ENCODE measurements at regions of chr20 and their contacts with region 1.

Region 1: DNA sequence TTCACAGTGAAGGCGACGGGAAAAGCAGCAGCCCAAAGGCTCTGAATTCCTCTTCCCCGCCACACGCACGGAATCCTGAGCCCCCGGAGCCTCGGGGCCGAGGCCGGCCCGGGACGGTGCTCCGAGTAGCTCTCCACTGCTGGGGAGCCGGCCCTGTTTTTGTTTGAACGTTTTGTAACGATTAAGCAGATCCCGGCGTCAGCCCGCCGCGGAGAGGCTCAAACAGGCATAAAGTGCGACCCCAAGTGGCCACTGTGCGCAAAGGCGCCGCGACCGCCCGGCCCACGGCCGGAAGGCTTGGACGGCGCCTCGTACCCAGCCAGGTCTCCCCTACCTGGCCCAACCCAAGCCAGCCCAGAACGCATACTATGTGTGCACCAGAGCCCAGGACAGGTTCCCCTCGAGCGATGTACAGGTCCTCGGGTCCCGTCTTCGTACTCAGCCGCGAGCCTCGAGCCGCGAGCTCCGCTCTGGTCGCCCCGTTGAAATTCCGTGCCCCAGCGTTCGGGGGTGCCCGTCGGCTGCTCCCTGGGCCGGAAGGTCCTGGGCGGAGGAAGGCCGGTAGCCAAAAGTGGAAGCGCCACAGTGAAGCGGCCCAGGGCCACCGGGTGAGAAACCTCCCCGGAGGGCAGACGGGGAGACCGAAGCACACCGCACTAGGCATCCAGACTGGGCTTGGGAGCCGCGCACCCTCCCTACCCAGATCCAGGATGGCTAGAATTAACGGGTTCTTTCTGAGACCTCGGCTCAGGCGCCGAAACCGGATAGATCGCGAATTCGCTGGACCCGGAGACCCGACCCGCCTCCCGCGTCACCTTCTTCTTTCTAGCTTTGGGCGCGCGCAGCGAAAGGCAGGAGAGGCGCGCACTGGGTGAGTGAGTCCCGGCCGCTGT is 1.2 kb upstream of the MAFB start:
- DNase-seq: peak; percentile 86 to 89 (median 86)
- H3K4me3 ChIP-seq: peak overlapping the region; percentile 42 to 99 (median 72)
- H3K4me3 Mint-ChIP-seq: peak overlapping the region; percentile 83 to 86
- H3K27ac ChIP-seq: peak overlapping the region; percentile 95 to 99
- H3K27ac Mint-ChIP-seq: peak overlapping the region; percentile 93 to 99 (median 96)
- H3K4me1 ChIP-seq: peaks cover 34 to 54% of the 10 kb centered on the region in 2 donors
- H3K4me1 Mint-ChIP-seq: peaks cover 46% of the 10 kb centered on the region
- H3K27me3 ChIP-seq: peaks cover 51 to 69% of the 10 kb centered on the region in 2 donors
- H3K27me3 Mint-ChIP-seq: peaks cover 71 to 81% (median 75%) of the 10 kb centered on the region in 3 donors
- CTCF ChIP-seq: peak; percentile 92

Region 2: GRCh38 chr20:39885975-39886649 is 804.1 kb before region 1 on chr20:
- intact Hi-C with region 1: loop called (anchors 10 kb)
- DNase-seq: peak; percentile 12 to 40 (median 34)
- H3K4me3 ChIP-seq: no peak overlapping the region
- H3K4me3 Mint-ChIP-seq: no peak overlapping the region
- H3K27ac ChIP-seq: no peak overlapping the region
- H3K27ac Mint-ChIP-seq: no peak overlapping the region
- H3K4me1 ChIP-seq: peaks cover 0 to 3% of the 10 kb centered on the region in 2 donors
- H3K4me1 Mint-ChIP-seq: peaks cover 6% of the 10 kb centered on the region
- H3K27me3 ChIP-seq: peaks cover 0 to 2% of the 10 kb centered on the region in 2 donors
- H3K27me3 Mint-ChIP-seq: peaks cover 0 to 3% (median 2%) of the 10 kb centered on the region in 3 donors
- CTCF ChIP-seq: peak; percentile 61

Region 3: DNA sequence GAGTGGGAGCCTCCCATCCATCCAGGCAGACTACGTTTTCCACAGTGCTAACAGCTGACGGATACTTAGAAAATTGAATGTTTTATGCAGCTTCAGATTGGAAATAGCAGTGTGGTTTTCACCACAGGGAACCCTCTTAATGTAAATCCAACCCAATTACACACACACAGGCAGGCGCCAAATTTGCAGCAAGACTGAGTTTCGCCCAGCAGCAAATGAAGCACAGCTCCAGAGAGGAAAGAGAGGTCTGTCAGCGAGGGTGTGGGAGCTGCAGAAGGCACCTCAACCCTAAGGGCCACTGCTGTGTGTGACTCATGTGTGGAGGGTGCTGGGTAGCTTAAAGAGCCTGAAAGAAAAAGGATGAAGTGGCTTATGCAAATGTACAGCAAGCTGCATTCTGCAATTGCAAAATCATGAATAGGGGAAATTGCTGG is 366.8 kb before region 1 on chr20:
- intact Hi-C with region 1: loop called (anchors 5 to 10 kb)
- DNase-seq: peak; percentile 92 to 96 (median 94)
- H3K4me3 ChIP-seq: peak overlapping the region in 1 of 3 experiments; percentile 27
- H3K4me3 Mint-ChIP-seq: peak overlapping the region; percentile 35 to 44
- H3K27ac ChIP-seq: peak overlapping the region; percentile 78 to 89
- H3K27ac Mint-ChIP-seq: peak overlapping the region; percentile 92 to 99 (median 95)
- H3K4me1 ChIP-seq: peaks cover 71 to 78% of the 10 kb centered on the region in 2 donors
- H3K4me1 Mint-ChIP-seq: peaks cover 72% of the 10 kb centered on the region
- H3K27me3 ChIP-seq: no peaks in the 10 kb centered on the region
- H3K27me3 Mint-ChIP-seq: peaks cover 0 to 6% (median 6%) of the 10 kb centered on the region in 3 donors
- CTCF ChIP-seq: no peak

Region 4: GRCh38 chr20:40492716-40493470 is 197.3 kb before region 1 on chr20:
- intact Hi-C with region 1: loop called (anchors 5 to 10 kb)
- DNase-seq: no peak
- H3K4me3 ChIP-seq: no peak overlapping the region
- H3K4me3 Mint-ChIP-seq: no peak overlapping the region
- H3K27ac ChIP-seq: peak overlapping the region; percentile 98 to 99
- H3K27ac Mint-ChIP-seq: peak overlapping the region; percentile 92 to 100 (median 99)
- H3K4me1 ChIP-seq: peaks cover 69 to 71% of the 10 kb centered on the region in 2 donors
- H3K4me1 Mint-ChIP-seq: peaks cover 70% of the 10 kb centered on the region
- H3K27me3 ChIP-seq: no peaks in the 10 kb centered on the region
- H3K27me3 Mint-ChIP-seq: peaks cover 0 to 3% (median 2%) of the 10 kb centered on the region in 3 donors
- CTCF ChIP-seq: no peak

Region 5: GRCh38 chr20:40506567-40506966 is 183.6 kb before region 1 on chr20:
- intact Hi-C with region 1: loop called in 1 of 2 experiments (anchors 5 kb)
- DNase-seq: peak; percentile 100
- H3K4me3 ChIP-seq: no peak overlapping the region
- H3K4me3 Mint-ChIP-seq: no peak overlapping the region
- H3K27ac ChIP-seq: peak overlapping the region; percentile 82 to 88
- H3K27ac Mint-ChIP-seq: peak overlapping the region; percentile 91 to 98 (median 95)
- H3K4me1 ChIP-seq: peaks cover 57 to 83% of the 10 kb centered on the region in 2 donors
- H3K4me1 Mint-ChIP-seq: peaks cover 80% of the 10 kb centered on the region
- H3K27me3 ChIP-seq: no peaks in the 10 kb centered on the region
- H3K27me3 Mint-ChIP-seq: peaks cover 0 to 1% (median 0%) of the 10 kb centered on the region in 3 donors
- CTCF ChIP-seq: no peak

Region 6: DNA sequence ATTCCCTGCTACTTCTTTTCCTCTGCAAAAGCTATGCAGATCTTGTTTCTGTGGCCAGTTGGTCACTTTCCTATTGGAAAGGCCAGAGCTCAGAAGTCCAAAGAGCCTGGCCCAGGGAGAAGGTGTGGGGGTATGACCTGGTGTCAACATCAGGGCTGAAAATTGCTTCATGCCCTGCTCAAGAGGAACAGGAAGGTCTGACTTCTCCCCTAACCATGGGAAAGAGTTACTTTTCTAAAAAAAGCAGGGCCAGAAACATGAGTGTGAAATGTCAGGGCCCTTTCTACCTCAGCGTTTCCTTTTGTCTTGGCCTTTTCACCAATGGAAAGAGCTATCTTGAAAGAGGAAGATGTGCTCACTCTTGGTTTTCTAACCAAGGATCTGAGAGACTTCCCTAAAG is 118.5 kb before region 1 on chr20:
- intact Hi-C with region 1: loop called in 1 of 2 experiments (anchors 10 kb)
- DNase-seq: peak; percentile 79 to 92 (median 88)
- H3K4me3 ChIP-seq: peak overlapping the region in 1 of 3 experiments; percentile 57
- H3K4me3 Mint-ChIP-seq: peak overlapping the region; percentile 41 to 57
- H3K27ac ChIP-seq: peak overlapping the region; percentile 92 to 95
- H3K27ac Mint-ChIP-seq: peak overlapping the region; percentile 88 to 97 (median 95)
- H3K4me1 ChIP-seq: peaks cover 53 to 59% of the 10 kb centered on the region in 2 donors
- H3K4me1 Mint-ChIP-seq: peaks cover 57% of the 10 kb centered on the region
- H3K27me3 ChIP-seq: no peaks in the 10 kb centered on the region
- H3K27me3 Mint-ChIP-seq: peaks cover 3 to 8% (median 3%) of the 10 kb centered on the region in 3 donors
- CTCF ChIP-seq: no peak

Region 7: DNA sequence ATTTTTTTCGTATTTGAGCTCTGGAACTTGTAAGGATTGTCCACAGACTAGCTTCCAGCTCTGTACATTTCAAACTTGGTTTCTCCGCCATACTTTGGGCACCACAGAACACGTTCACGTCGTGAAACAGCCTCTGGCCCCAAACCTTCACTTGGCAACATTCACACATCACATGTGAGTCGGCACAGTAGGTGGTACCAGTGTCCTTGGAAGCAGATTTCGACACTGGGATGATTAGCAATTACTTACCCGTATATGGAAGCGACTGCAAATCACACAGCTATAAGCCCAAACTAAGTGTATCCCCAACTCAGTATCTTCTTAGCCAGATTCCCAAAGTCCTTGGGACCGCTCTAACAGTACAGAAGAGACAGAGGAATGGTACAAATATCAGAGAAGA is 61.3 kb before region 1 on chr20:
- intact Hi-C with region 1: no loop called
- DNase-seq: no peak
- H3K4me3 ChIP-seq: no peak overlapping the region
- H3K4me3 Mint-ChIP-seq: no peak overlapping the region
- H3K27ac ChIP-seq: no peak overlapping the region
- H3K27ac Mint-ChIP-seq: peak overlapping the region in 1 of 7 donors; percentile 66
- H3K4me1 ChIP-seq: no peaks in the 10 kb centered on the region
- H3K4me1 Mint-ChIP-seq: no peaks in the 10 kb centered on the region
- H3K27me3 ChIP-seq: peaks cover 4 to 11% of the 10 kb centered on the region in 2 donors
- H3K27me3 Mint-ChIP-seq: peaks cover 11 to 35% (median 17%) of the 10 kb centered on the region in 3 donors
- CTCF ChIP-seq: no peak

Region 8: GRCh38 chr20:41047975-41048305 is 357.8 kb after region 1 on chr20:
- intact Hi-C with region 1: no loop called
- DNase-seq: peak; percentile 28 to 68 (median 62)
- H3K4me3 ChIP-seq: peak overlapping the region; percentile 12 to 87 (median 77)
- H3K4me3 Mint-ChIP-seq: peak overlapping the region; percentile 72 to 85
- H3K27ac ChIP-seq: peak overlapping the region in 1 of 2 donors; percentile 69
- H3K27ac Mint-ChIP-seq: peak overlapping the region; percentile 72 to 90 (median 80)
- H3K4me1 ChIP-seq: peaks cover 53 to 64% of the 10 kb centered on the region in 2 donors
- H3K4me1 Mint-ChIP-seq: peaks cover 75% of the 10 kb centered on the region
- H3K27me3 ChIP-seq: no peaks in the 10 kb centered on the region
- H3K27me3 Mint-ChIP-seq: peaks cover 0 to 2% (median 0%) of the 10 kb centered on the region in 3 donors
- CTCF ChIP-seq: no peak

Measured in CD14-positive monocyte (primary cell).